Vagina (tissue), 2 donors: ENCODE measurements at regions of chr12 and their contacts with region 1.

Region 1: GRCh38 chr12:110577717-110578521 is 5.2 kb downstream of the PPTC7 start:
- DNase-seq: no peak
- H3K4me3 ChIP-seq: peak overlapping the region in 1 of 2 donors; percentile 1
- H3K27ac ChIP-seq: peak overlapping the region; percentile 87
- H3K4me1 ChIP-seq: peaks cover 87% of the 10 kb centered on the region
- H3K27me3 ChIP-seq: no peaks in the 10 kb centered on the region
- CTCF ChIP-seq: no peak
- POLR2A ChIP-seq: no peak

Region 2: DNA sequence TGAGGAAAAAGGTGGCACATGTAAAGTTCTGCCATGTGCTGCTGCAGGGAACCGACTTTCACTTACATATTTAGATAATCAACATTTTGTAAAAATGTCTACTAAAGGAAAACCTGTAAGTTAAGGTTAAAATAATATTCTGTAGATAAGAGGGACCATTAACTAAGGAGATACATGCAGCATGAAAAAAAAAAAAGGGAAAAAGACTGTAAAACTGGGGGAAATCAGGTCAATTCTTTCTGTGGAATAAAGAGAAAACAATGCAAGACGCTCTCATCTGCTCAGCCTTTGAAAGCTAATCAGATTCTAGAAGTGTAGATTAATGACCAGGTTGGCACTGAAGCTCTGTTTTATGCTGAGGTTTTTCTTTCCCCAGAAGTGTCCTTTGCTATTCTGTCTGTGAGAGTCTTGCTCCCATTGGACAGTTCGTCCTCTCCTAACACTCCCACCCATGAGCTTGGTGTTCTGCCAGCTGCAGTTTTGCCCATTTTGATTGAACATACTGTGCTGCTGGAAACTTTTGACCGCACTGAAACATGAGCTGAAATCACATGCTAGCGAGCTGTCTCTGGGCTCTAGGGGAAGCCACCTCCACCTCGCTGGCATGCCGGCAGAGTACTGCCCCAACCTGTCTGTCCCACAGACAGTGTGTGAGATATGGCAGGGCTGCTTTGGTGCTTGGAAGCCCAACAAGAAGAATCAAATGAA is 34.5 kb before region 1 on chr12:
- intact Hi-C with region 1: loop called (anchors 5 kb)
- DNase-seq: peak in 1 of 2 donors; percentile 97
- H3K4me3 ChIP-seq: peak overlapping the region in 1 of 2 donors; percentile 6
- H3K27ac ChIP-seq: peak overlapping the region; percentile 82
- H3K4me1 ChIP-seq: peaks cover 77% of the 10 kb centered on the region
- H3K27me3 ChIP-seq: no peaks in the 10 kb centered on the region
- CTCF ChIP-seq: no peak
- POLR2A ChIP-seq: no peak

Region 3: DNA sequence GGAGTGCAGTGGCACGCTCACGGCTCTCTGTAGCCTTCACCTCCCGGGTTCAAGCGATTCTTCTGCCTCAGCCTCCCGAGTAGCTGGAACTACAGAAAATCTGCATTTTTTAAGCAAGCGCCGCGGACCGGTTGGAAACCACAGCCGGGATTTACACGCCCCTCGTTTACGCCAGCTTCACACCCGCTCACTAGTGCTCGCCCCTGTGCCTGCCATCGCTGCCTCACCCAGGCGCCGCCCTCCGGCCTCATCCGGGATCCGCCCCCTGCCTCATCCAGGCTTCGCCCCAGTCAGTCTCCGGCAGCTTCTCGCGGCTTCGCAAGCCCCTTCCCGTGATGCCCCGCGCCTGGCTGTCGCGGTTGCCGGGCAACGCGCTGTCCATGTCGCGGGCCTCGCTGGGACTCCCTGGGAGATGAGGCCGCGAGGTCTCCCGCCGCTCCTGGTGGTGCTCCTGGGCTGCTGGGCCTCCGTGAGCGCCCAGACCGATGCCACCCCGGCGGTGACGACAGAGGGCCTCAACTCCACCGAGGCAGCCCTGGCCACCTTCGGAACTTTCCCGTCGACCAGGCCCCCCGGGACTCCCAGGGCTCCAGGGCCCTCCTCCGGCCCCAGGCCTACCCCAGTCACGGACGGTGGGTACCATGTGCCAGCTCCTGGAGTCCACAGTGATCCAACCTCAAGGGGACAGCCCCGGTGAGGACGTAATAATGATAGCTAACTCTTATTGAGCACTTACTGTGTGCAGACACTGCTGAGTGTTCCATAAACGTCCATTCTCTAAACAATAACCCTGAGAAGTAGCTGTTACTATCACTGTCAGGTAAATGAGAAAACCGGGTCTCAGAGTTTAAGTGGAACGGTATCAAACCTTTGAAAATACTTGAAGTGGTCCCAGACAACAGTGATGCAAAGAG is 36.1 kb after region 1 on chr12 and contains the start of gene TCTN1:
- intact Hi-C with region 1: no loop called
- DNase-seq: peak; percentile 96 to 98
- H3K4me3 ChIP-seq: peak within 1 kb of the TSS; percentile 70 to 71
- H3K27ac ChIP-seq: peak within 1 kb of the TSS; percentile 71
- H3K4me1 ChIP-seq: peaks cover 16% of the 10 kb centered on the region
- H3K27me3 ChIP-seq: no peaks in the 10 kb centered on the region
- CTCF ChIP-seq: no peak
- POLR2A ChIP-seq: peak; percentile 51 to 61
- total RNA-seq, gene TCTN1: 31.4 TPM